A549 (cell line): ENCODE measurements at regions of chr17 and their contacts with region 1.

Region 1: DNA sequence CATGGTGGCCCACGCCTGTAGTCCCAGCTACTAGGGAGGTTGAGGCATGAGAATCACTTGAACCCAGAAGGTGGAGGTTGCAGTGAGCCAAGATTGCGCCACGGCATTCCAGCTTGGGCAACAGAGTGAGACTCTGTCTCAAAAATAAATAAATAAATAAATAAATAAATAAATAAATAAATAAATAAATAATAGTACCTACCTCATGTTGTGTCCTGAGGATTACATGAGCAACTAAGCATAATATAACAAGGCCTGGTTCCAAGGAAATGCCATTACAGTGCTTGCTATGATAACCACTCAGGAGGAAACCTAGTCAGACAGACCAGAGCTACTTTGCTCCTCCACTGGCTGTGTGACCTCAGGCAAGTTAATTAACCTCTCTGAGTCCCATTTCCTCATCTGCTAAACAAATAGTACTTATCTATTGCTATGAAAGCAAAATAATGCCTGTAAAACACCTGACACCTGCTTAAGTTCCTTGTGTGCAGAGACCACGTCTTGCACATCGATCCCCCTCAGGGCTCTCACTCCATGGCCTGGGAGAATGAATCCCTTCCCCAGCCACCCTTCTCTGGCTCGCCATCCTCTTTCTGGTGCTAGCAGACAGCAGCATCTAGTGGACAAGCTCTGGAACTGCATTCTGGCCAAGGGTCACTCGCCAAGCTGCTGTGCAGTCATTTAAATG is 7.5 kb downstream of the EPOP start:
- DNase-seq: peak; percentile 82 to 89
- ATAC-seq: peak; percentile 55 to 68; a peak in 5 of 6 replicates
- H3K4me3 ChIP-seq: no peak overlapping the region
- H3K27ac ChIP-seq: no peak overlapping the region
- H3K4me1 ChIP-seq: peaks cover 14% of the 10 kb centered on the region; the same call in 2 of the 3 replicates
- CTCF ChIP-seq: peak; percentile 100
- EP300 ChIP-seq: no peak
- POLR2A ChIP-seq: no peak
- RAD21 ChIP-seq: peak; percentile 99 to 100

Region 2: DNA sequence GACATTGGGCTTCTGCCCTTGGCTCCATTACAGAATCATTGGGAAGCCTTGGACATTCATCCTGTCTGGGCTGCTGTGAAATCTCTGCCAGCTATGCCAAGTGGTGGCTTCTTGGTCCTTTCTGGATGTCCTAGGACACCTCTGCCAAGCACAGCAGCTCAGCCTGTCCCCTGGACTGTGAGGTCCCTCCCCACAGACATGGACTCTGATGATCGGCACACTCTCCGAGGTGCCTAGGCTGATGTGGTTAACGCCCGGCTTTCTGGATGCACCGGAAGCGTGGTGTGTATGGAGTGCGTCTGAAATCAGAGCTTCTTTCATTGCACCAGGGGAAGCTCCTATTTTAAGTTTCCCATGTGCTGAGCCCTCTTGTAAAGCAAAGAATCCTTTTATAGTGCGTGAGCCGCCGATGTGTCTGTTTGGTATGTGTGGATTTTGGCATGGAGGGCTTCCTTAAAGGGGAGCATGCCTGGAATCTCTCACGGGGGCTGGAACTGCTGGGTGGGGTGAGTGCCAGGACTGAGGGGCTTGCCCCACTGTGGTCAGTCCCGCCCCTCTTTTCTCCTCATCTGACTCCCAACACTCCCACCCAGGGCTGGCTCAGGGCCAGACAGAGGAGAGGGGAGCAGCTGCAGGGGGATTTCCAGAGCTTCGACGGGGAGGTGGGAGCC is 245.9 kb before region 1 on chr17:
- CTCF ChIA-PET with region 1: interaction called, 42 read pairs
- POLR2A ChIA-PET with region 1: no interaction called
- DNase-seq: no peak
- ATAC-seq: no peak
- H3K4me3 ChIP-seq: no peak overlapping the region
- H3K27ac ChIP-seq: no peak overlapping the region
- H3K4me1 ChIP-seq: no peaks in the 10 kb centered on the region
- CTCF ChIP-seq: no peak
- EP300 ChIP-seq: no peak
- POLR2A ChIP-seq: no peak
- RAD21 ChIP-seq: no peak

Region 3: DNA sequence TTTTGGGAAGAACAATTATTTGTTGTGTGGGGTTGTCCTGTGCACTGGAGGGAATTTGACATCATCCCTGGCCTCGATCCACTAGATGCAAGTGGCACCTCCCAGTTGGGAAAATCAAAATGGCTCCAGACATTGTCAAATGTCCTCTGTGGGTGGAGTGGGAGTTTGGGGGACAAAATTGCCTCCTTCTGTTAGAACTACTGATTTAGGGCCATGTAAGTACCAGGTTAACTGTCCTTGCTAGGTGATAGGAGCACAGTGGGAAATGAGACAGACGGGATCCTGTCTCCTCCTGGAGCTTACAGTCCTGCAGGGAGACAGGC is 182.1 kb before region 1 on chr17:
- CTCF ChIA-PET with region 1: interaction called, 128 read pairs
- POLR2A ChIA-PET with region 1: no interaction called
- DNase-seq: no peak
- ATAC-seq: no peak
- H3K4me3 ChIP-seq: no peak overlapping the region
- H3K27ac ChIP-seq: no peak overlapping the region
- H3K4me1 ChIP-seq: no peaks in the 10 kb centered on the region
- CTCF ChIP-seq: no peak
- EP300 ChIP-seq: no peak
- POLR2A ChIP-seq: no peak
- RAD21 ChIP-seq: no peak

Region 4: DNA sequence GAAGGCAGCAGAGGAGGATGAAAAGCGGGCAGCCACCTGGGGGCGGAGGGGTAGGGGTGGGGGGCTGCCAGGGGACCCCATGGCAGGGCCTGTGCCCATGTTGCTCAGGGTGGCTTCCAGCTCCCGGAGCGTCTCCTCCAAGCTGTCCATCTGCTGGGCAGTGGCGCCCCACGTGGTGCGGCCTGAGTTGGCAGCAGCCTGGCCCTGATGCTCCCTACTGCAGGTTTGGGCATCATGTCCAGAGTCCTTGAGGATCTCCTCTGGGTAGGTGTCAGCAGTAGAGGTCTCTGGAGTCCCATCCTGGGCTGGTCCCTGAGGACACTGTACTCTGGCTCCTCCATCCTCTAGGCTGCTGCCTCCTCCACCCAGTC is 122.4 kb before region 1 on chr17:
- CTCF ChIA-PET with region 1: interaction called, 435 read pairs
- POLR2A ChIA-PET with region 1: no interaction called
- DNase-seq: no peak
- ATAC-seq: peak; percentile 17 to 63; a peak in 4 of 6 replicates
- H3K4me3 ChIP-seq: no peak overlapping the region
- H3K27ac ChIP-seq: no peak overlapping the region
- H3K4me1 ChIP-seq: no peaks in the 10 kb centered on the region
- CTCF ChIP-seq: no peak
- EP300 ChIP-seq: no peak
- POLR2A ChIP-seq: no peak
- RAD21 ChIP-seq: no peak

Region 5: GRCh38 chr17:38584350-38584925 is 82.8 kb before region 1 on chr17:
- CTCF ChIA-PET with region 1: interaction called, 190 read pairs
- POLR2A ChIA-PET with region 1: interaction called, 4 read pairs
- DNase-seq: peak; percentile 80 to 92
- ATAC-seq: peak; percentile 79 to 91
- H3K4me3 ChIP-seq: peak overlapping the region; percentile 24; the same call in 1 of the 3 replicates
- H3K27ac ChIP-seq: peak overlapping the region; percentile 51 to 63; a peak in 5 of 6 replicates
- H3K4me1 ChIP-seq: peaks cover 28% of the 10 kb centered on the region
- CTCF ChIP-seq: peak; percentile 99
- EP300 ChIP-seq: no peak
- POLR2A ChIP-seq: no peak
- RAD21 ChIP-seq: peak; percentile 88 to 93

Region 6: DNA sequence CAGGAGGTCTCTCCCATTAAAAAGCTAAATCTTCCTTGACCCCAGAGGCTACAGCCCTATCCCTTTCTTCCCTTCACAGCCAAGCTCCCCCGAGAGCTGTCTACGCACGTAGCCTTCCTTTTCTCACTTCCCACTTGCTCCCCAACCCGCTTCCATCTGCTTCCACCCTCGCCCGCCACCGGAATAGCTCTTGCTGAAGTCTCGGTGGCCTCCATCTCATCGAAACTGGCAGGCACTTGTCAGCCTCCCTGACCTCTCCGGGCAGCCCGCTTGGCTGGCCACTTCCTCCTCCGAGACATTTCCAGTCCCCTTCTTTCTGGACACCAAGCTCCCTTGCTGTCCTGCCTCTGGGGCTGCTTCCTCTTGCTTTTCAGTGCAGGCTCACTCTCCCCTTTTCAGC is 18.2 kb after region 1 on chr17:
- CTCF ChIA-PET with region 1: interaction called, 143 read pairs
- POLR2A ChIA-PET with region 1: no interaction called
- DNase-seq: no peak
- ATAC-seq: no peak; a peak in 1 of 6 replicates
- H3K4me3 ChIP-seq: no peak overlapping the region
- H3K27ac ChIP-seq: no peak overlapping the region
- H3K4me1 ChIP-seq: no peaks in the 10 kb centered on the region
- CTCF ChIP-seq: no peak
- EP300 ChIP-seq: no peak
- POLR2A ChIP-seq: no peak
- RAD21 ChIP-seq: no peak

Region 7: GRCh38 chr17:38844261-38844757 is 177.1 kb after region 1 on chr17:
- CTCF ChIA-PET with region 1: no interaction called
- POLR2A ChIA-PET with region 1: no interaction called
- DNase-seq: no peak
- ATAC-seq: peak in 1 of 2 experiments; percentile 3; a peak in 1 of 6 replicates
- H3K4me3 ChIP-seq: no peak overlapping the region
- H3K27ac ChIP-seq: no peak overlapping the region
- H3K4me1 ChIP-seq: no peaks in the 10 kb centered on the region
- CTCF ChIP-seq: no peak
- EP300 ChIP-seq: no peak
- POLR2A ChIP-seq: no peak
- RAD21 ChIP-seq: no peak